Heart right ventricle (tissue), 16 donors: ENCODE measurements at regions of chr20 and their contacts with region 1.

Region 1: GRCh38 chr20:19995220-19995863 is 21.8 kb upstream of the NAA20 start:
- DNase-seq: peak in 1 of 2 donors; percentile 47
- ATAC-seq: peak in 4 of 8 donors; percentile 27 to 54 (median 34)
- H3K4me3 ChIP-seq: no peak overlapping the region
- H3K27ac ChIP-seq: peak overlapping the region in 8 of 10 donors; percentile 15 to 81 (median 74)
- H3K4me1 ChIP-seq: peaks cover 42 to 99% (median 88%) of the 10 kb centered on the region in 9 donors
- H3K27me3 ChIP-seq: no peaks in the 10 kb centered on the region
- CTCF ChIP-seq: peak; percentile 59 to 88 (median 79)

Region 2: GRCh38 chr20:19699180-19699971 is 296.0 kb before region 1 on chr20:
- intact Hi-C with region 1: loop called in 9 of 10 experiments (anchors 5 to 10 kb)
- DNase-seq: no peak
- ATAC-seq: peak in 2 of 8 donors; percentile 49 to 66
- H3K4me3 ChIP-seq: no peak overlapping the region
- H3K27ac ChIP-seq: no peak overlapping the region
- H3K4me1 ChIP-seq: peaks cover 0 to 19% (median 7%) of the 10 kb centered on the region in 9 donors
- H3K27me3 ChIP-seq: no peaks in the 10 kb centered on the region
- CTCF ChIP-seq: no peak

Region 3: GRCh38 chr20:19784511-19785172 is 210.7 kb before region 1 on chr20:
- intact Hi-C with region 1: loop called (anchors 1 to 10 kb)
- DNase-seq: peak; percentile 31 to 81
- ATAC-seq: peak; percentile 67 to 89 (median 82)
- H3K4me3 ChIP-seq: peak overlapping the region in 1 of 10 donors; percentile 1
- H3K27ac ChIP-seq: peak overlapping the region; percentile 32 to 91 (median 76)
- H3K4me1 ChIP-seq: peaks cover 28 to 67% (median 58%) of the 10 kb centered on the region in 9 donors
- H3K27me3 ChIP-seq: no peaks in the 10 kb centered on the region
- CTCF ChIP-seq: peak; percentile 59 to 87 (median 78)

Region 4: GRCh38 chr20:19903168-19903811 is 92.1 kb before region 1 on chr20:
- intact Hi-C with region 1: loop called in 4 of 10 experiments (anchors 2 to 10 kb)
- DNase-seq: peak in 1 of 2 donors; percentile 47
- ATAC-seq: peak in 7 of 8 donors; percentile 31 to 64 (median 41)
- H3K4me3 ChIP-seq: no peak overlapping the region
- H3K27ac ChIP-seq: peak overlapping the region in 4 of 10 donors; percentile 3 to 37 (median 30)
- H3K4me1 ChIP-seq: peaks cover 5 to 66% (median 45%) of the 10 kb centered on the region in 9 donors
- H3K27me3 ChIP-seq: no peaks in the 10 kb centered on the region
- CTCF ChIP-seq: peak in 7 of 9 donors; percentile 8 to 54 (median 32)

Region 5: DNA sequence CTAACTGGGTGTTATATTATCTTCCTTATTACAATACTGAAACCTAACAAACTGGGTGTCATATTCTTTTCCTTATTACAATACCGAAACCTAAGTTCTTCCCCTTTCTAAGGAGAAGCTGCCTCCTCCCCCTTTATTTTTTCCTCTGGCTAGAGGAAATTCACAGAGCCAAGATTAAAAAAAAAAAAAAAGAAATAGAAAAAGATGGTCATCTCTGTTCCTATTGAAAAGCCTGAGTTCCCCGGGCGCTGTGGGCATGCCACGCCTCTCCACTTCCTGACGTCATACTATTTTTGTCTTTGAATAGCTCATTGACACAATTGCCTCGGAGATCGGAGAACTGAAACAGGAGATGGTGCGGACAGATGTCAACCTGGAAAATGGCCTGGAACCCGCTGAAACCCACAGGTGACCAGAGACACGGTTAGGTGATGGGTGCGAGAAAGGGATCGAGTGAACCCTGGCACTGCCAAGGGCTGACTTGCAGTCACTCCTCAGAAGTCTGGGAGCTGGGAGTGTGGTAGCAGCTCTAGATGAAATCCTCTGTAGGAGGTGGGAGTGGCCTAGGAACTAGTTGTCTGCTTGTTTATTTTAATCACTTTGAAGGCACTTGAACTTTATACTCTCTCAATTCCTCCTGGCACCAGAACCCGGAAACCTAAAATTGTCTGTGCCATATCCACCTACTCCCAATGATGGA is 60.4 kb before region 1 on chr20:
- intact Hi-C with region 1: loop called in 2 of 10 experiments (anchors 5 kb)
- DNase-seq: peak; percentile 51 to 86
- ATAC-seq: peak; percentile 57 to 83 (median 72)
- H3K4me3 ChIP-seq: peak overlapping the region in 8 of 10 donors; percentile 2 to 53 (median 44)
- H3K27ac ChIP-seq: peak overlapping the region; percentile 11 to 89 (median 76)
- H3K4me1 ChIP-seq: peaks cover 5 to 100% (median 88%) of the 10 kb centered on the region in 9 donors
- H3K27me3 ChIP-seq: no peaks in the 10 kb centered on the region
- CTCF ChIP-seq: no peak

Region 6: DNA sequence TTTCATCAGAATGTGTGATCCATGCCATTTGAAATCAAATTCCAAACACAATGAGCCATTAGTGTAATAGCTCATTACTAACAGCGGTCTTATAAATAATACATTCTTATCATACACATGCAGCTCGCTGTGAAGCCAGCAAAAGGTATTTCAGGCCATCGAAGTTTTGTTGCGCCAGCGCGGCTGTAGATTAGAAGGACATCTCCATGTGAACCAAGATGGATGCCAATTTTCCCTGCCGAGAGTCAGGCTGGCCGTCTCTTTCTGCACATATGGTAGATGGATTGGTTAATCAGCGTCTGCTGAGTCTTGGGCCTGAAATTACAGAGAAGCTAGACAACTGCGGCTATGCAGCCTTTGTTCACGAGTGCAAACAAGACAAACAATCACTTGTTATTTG is 101.1 kb after region 1 on chr20:
- intact Hi-C with region 1: no loop called
- DNase-seq: no peak
- ATAC-seq: peak in 4 of 8 donors; percentile 50 to 83 (median 70)
- H3K4me3 ChIP-seq: no peak overlapping the region
- H3K27ac ChIP-seq: peak overlapping the region in 3 of 10 donors; percentile 27 to 45 (median 42)
- H3K4me1 ChIP-seq: peaks cover 0 to 8% (median 0%) of the 10 kb centered on the region in 9 donors
- H3K27me3 ChIP-seq: peaks cover 0 to 8% (median 0%) of the 10 kb centered on the region in 7 donors
- CTCF ChIP-seq: no peak

Region 7: GRCh38 chr20:20628314-20628713 is 633.0 kb after region 1 on chr20:
- intact Hi-C with region 1: no loop called
- DNase-seq: no peak
- ATAC-seq: no peak
- H3K4me3 ChIP-seq: no peak overlapping the region
- H3K27ac ChIP-seq: no peak overlapping the region
- H3K4me1 ChIP-seq: no peaks in the 10 kb centered on the region
- H3K27me3 ChIP-seq: no peaks in the 10 kb centered on the region
- CTCF ChIP-seq: no peak